Activated CD8-positive, alpha-beta T cell treated with anti-CD3 and anti-CD28 coated beads for 36 hours (primary cell): ENCODE measurements at regions of chr10 and their contacts with region 1.

Region 1: DNA sequence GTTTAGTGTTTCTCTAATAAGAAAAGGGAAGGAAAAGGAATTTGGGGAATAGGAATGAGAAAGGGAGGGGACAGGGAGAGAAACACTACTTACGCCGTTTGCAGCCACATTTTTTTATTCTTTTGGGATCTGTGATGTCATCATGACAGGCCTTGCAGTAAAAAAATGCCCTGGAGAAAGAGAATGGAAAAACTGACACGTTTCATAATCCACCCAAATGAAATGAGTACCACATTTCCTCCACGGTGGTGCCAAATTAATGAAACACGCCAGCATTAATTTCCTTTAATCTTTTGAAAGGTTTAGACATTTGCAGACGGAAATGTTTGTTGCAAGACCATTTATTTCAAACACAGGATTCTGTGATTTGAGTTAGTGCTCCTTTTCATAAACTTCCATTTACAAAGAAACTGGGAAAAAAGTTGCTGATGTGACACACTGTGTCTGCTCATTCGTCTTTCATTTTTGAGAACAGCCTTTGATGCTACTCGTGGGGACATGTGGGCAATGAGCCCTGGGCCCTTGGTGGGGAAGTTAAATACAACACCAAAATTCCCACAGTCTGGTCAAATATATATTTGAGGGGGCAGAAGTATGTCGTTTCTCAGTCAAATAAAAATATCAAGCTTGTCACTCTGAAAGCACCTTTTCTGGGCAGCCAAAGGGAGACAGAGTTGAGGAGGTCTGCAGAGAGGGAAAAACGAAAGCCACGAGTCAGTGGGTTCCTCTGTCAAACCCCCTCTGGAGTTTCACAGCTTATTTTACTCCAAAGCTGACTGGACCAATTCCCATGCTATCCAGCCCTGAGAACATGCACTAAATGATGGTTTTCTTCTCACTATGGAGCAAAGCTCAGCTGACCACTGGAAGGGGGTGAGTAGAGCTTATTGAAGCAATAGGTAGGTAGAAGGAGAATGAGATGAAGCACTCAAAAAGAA is 625.5 kb downstream of the KCNMA1 start:
- DNase-seq: no peak
- ATAC-seq: no peak
- H3K4me3 Mint-ChIP-seq: no peak overlapping the region
- H3K27ac Mint-ChIP-seq: no peak overlapping the region
- H3K4me1 Mint-ChIP-seq: no peaks in the 10 kb centered on the region
- H3K27me3 Mint-ChIP-seq: peaks cover 2% of the 10 kb centered on the region
- CTCF ChIP-seq: no peak

Region 2: DNA sequence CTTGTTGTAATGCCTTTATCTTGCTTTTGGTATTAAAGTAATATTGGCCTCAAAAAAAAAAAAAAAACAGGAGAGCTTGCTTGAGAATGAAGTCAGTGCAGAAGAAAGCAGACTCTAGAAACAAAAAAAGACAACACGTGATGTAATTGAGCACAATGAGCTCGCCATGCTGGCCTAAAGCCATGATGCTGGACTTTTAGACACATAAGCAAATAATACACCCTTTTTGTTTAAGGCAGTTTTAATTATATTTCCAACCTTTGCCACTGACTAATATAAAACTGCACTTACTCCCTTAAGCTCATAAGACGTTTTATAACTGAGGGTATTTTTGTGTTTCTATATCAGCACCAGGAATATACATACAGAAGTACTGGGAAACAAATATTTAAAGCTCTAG is 172.9 kb before region 1 on chr10:
- CTCF ChIA-PET with region 1: no interaction called
- POLR2A ChIA-PET with region 1: no interaction called
- intact Hi-C with region 1: no loop called
- DNase-seq: no peak
- ATAC-seq: no peak
- H3K4me3 Mint-ChIP-seq: no peak overlapping the region
- H3K27ac Mint-ChIP-seq: no peak overlapping the region
- H3K4me1 Mint-ChIP-seq: no peaks in the 10 kb centered on the region
- H3K27me3 Mint-ChIP-seq: peaks cover 4% of the 10 kb centered on the region
- CTCF ChIP-seq: no peak

Region 3: DNA sequence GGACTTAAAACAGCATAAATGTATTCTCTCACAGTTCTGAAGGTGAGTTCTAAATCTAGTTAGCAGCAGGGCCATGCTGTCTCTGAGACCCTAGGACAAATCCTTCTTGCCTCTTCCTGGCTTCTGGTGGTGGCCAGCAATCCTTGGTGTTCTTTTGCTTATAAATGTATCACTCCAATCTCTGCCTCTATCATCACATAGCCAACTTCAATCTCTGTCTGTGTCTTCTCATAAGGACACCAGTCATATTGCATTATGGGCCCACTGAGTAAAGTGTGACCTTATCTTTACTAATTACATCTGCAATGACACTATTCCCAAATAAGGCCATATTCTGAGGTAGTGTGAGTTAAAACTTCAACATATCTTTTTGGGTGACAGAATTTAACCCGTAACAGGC is 153.4 kb before region 1 on chr10:
- CTCF ChIA-PET with region 1: no interaction called
- POLR2A ChIA-PET with region 1: no interaction called
- intact Hi-C with region 1: no loop called
- DNase-seq: no peak
- ATAC-seq: no peak
- H3K4me3 Mint-ChIP-seq: no peak overlapping the region
- H3K27ac Mint-ChIP-seq: no peak overlapping the region
- H3K4me1 Mint-ChIP-seq: no peaks in the 10 kb centered on the region
- H3K27me3 Mint-ChIP-seq: no peaks in the 10 kb centered on the region
- CTCF ChIP-seq: no peak

Region 4: GRCh38 chr10:77027576-77027975 is 15.4 kb after region 1 on chr10:
- CTCF ChIA-PET with region 1: no interaction called
- POLR2A ChIA-PET with region 1: no interaction called
- intact Hi-C with region 1: no loop called
- DNase-seq: no peak
- ATAC-seq: no peak
- H3K4me3 Mint-ChIP-seq: no peak overlapping the region
- H3K27ac Mint-ChIP-seq: no peak overlapping the region
- H3K4me1 Mint-ChIP-seq: no peaks in the 10 kb centered on the region
- H3K27me3 Mint-ChIP-seq: peaks cover 6% of the 10 kb centered on the region
- CTCF ChIP-seq: no peak

Region 5: GRCh38 chr10:77111611-77112550 is 99.7 kb after region 1 on chr10:
- CTCF ChIA-PET with region 1: no interaction called
- POLR2A ChIA-PET with region 1: no interaction called
- intact Hi-C with region 1: loop called (anchors 10 kb)
- DNase-seq: peak; percentile 5
- ATAC-seq: peak; percentile 62
- H3K4me3 Mint-ChIP-seq: no peak overlapping the region
- H3K27ac Mint-ChIP-seq: no peak overlapping the region
- H3K4me1 Mint-ChIP-seq: peaks cover 2% of the 10 kb centered on the region
- H3K27me3 Mint-ChIP-seq: peaks cover 4% of the 10 kb centered on the region
- CTCF ChIP-seq: peak; percentile 80